Activated naive CD4-positive, alpha-beta T cell treated with anti-CD3 and anti-CD28 coated beads, Interleukin-2, amount 10 ng/mL, durations not matched to agents 7 days and 5 days (primary cell): ENCODE measurements at regions of chr18 and their contacts with region 1.

Region 1: DNA sequence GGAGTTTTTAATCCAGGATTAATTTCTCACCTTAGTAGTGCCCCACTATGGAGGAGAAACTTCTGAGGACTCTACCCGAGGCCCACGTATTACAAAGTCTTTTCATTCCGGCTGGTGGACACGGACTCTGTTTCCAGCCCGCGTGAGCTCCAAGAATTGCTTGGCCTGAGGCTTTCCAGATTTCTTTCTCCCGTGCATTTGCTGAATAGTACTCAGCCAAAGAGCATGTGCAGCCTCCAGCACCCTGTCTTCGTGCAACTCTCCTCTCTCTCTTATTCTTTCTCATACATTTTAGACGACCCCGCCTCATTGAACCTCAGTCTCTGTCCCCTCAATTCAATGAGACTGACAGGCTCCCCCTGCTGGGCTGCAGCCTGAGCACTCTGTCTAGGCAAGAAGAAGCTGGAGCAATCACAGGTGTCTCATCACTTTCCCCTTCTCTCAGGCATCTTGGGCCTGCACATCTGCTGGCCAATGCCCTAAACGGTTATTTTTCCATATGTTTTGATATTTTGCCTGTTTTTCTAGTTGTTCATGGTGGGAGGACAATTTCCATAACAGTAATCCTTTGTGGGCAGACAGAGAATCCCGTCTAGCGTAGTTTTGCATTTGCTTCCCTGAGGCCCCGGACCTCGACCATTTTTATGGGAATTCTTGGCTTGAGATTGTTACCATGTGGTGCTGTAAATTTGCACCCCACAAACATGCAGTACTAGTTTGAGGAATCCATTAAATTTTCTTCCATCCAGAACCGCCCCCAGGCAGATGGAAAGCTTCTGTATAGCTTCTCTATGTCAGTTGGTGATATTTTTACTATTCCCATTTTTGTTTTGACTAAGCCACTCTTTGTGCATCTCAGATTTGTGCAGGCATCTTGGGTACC is 50.1 kb upstream of the LPIN2 start:
- DNase-seq: peak; percentile 89
- H3K4me3 Mint-ChIP-seq: peak overlapping the region; percentile 65
- H3K27ac Mint-ChIP-seq: peak overlapping the region; percentile 100
- H3K4me1 Mint-ChIP-seq: peaks cover 73% of the 10 kb centered on the region
- H3K27me3 Mint-ChIP-seq: no peaks in the 10 kb centered on the region

Region 2: DNA sequence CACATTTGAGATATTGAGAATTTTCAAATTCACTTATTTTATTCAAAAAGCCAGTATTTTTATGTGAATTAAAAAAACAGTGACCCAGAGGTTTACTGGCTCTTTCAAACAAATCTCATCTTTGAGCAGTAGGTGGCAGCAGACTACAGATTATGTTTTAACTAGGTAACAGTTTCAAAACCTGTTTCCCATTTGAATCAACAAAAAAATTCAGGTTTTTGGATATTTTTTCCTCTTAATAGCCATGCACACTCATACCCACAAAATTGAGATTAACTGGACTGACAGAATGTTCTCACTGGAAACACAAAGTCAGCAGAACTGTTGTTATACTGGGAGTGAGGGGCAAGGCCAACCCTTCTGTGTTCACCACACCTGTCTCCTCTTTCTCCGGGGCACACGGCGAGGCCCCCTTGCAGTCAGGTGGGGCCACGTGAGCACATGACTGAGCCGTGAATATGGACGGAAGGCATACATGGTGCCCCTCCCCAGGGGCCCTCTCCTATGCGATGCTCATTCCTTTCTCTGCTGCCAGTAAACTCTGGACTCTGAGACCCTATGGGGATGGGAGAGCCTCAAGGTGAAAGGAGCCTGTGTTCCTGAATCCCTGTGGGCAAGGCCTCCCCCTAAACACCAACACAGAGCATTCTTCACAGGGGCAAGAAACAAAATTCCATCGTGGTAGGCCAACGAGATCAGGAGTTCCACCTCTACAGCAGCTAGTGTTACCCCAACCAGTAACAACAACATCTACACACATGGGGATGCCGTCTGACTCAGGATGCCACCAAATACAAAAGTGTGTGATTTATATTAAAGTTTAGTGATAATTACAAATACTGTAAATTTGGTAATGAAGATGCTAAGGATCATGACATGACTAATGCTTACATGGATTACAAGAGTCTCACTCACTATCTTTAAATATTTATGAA is 130.5 kb before region 1 on chr18:
- CTCF ChIA-PET with region 1: interaction called, 14 read pairs
- DNase-seq: peak; percentile 54
- H3K4me3 Mint-ChIP-seq: no peak overlapping the region
- H3K27ac Mint-ChIP-seq: peak overlapping the region; percentile 57
- H3K4me1 Mint-ChIP-seq: peaks cover 23% of the 10 kb centered on the region
- H3K27me3 Mint-ChIP-seq: no peaks in the 10 kb centered on the region

Region 3: DNA sequence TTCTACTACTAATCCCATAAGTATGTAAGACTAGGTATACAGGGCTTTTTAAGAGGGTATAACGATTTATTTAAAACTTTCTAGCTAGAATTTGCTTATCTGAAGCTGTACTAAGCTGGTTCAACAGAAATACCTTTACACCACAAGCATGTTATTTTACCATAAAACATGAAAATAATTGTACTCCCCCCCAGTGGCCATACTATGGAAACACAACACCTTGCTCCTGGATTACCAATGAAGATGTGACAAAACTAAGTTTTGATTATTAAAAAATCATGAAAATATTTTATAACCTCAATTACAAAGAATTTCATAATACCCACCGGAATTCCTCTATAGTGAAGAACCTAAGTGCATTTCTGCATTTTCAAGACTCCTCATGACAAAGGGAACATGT is 77.4 kb before region 1 on chr18:
- CTCF ChIA-PET with region 1: interaction called, 22 read pairs
- DNase-seq: no peak
- H3K4me3 Mint-ChIP-seq: no peak overlapping the region
- H3K27ac Mint-ChIP-seq: no peak overlapping the region
- H3K4me1 Mint-ChIP-seq: peaks cover 76% of the 10 kb centered on the region
- H3K27me3 Mint-ChIP-seq: no peaks in the 10 kb centered on the region

Region 4: GRCh38 chr18:3012964-3013804 is 49.9 kb before region 1 on chr18 and contains the start of gene LPIN2:
- CTCF ChIA-PET with region 1: interaction called, 80 read pairs
- DNase-seq: peak; percentile 97
- H3K4me3 Mint-ChIP-seq: peak within 1 kb of the TSS; percentile 83
- H3K27ac Mint-ChIP-seq: peak within 1 kb of the TSS; percentile 90
- H3K4me1 Mint-ChIP-seq: peaks cover 70% of the 10 kb centered on the region
- H3K27me3 Mint-ChIP-seq: no peaks in the 10 kb centered on the region

Region 5: GRCh38 chr18:3074087-3074486 is 11.0 kb after region 1 on chr18:
- CTCF ChIA-PET with region 1: interaction called, 46 read pairs
- DNase-seq: no peak
- H3K4me3 Mint-ChIP-seq: no peak overlapping the region
- H3K27ac Mint-ChIP-seq: no peak overlapping the region
- H3K4me1 Mint-ChIP-seq: peaks cover 18% of the 10 kb centered on the region
- H3K27me3 Mint-ChIP-seq: no peaks in the 10 kb centered on the region

Region 6: DNA sequence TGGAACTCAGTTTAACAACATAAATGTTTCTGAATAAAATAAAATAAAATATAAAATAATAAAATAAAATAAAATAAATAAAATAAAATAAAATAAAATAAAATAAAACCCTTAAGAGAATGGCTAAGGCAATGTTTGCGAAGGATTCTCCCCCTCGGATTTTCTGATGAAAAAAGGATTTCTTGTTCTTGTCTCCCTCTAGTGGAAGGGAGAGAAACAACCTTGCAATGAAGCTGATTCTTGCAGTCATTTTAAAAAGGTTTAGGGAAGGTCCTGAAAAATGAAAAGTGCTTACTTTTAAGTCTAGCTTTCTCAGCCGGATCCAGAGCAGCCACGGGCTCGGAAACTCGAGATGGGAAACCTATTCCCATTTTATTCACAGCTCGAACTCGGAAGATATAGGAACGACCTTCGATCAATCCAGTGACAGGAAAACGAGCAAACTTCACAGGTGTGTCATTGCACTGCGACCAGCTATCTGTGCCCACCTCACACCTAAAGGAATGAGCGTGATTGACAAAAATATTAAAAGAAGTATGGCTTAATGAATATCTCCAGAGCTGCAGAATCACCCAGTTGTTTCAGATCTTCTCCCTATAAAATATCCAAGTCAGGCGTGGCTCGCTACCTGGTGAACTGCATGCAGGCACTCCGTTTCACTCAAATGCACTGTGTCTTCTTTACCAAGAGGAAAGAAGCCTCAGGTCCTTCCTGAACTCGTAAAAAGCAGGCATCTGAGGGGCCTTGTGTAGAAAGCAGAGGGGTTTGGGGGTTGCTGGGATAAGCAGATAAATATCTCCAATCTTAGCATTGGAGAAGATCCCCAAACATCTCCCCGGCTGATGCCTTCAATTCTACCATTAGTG is 88.6 kb after region 1 on chr18:
- CTCF ChIA-PET with region 1: interaction called, 10 read pairs
- DNase-seq: no peak
- H3K4me3 Mint-ChIP-seq: no peak overlapping the region
- H3K27ac Mint-ChIP-seq: no peak overlapping the region
- H3K4me1 Mint-ChIP-seq: peaks cover 6% of the 10 kb centered on the region
- H3K27me3 Mint-ChIP-seq: peaks cover 7% of the 10 kb centered on the region

Region 7: DNA sequence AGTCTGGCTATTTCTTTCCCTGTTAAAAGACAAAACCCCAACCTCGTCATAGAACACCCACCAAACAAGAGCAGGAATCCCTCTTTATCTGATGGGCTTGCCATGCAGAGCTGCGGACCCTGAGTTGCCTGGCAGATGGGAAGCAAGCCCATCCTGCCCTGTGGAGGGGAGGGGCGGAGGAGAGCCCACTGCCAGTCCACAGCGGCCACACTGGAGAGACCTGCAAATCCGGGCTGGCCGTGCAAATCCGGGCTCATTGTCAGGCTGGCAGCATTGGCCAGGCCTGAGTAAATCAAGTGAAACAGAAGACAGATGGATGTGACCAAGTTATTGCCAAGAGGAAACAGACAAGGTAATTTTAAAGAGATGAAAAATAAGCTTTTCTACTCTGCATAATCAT is 220.9 kb after region 1 on chr18:
- CTCF ChIA-PET with region 1: no interaction called
- DNase-seq: no peak
- H3K4me3 Mint-ChIP-seq: no peak overlapping the region
- H3K27ac Mint-ChIP-seq: no peak overlapping the region
- H3K4me1 Mint-ChIP-seq: no peaks in the 10 kb centered on the region
- H3K27me3 Mint-ChIP-seq: peaks cover 6% of the 10 kb centered on the region